ENCODE measurements at regions of chr12 and their contacts with region 1.

Region 1: GRCh38 chr12:24960222-24960855 is 11.4 kb upstream of the BCAT1 start:
- DNase-seq: peak; percentile 76
- H3K4me3 Mint-ChIP-seq: no peak overlapping the region
- H3K27ac Mint-ChIP-seq: no peak overlapping the region
- H3K4me1 Mint-ChIP-seq: peaks cover 23% of the 10 kb centered on the region
- H3K27me3 Mint-ChIP-seq: peaks cover 17% of the 10 kb centered on the region

Region 2: DNA sequence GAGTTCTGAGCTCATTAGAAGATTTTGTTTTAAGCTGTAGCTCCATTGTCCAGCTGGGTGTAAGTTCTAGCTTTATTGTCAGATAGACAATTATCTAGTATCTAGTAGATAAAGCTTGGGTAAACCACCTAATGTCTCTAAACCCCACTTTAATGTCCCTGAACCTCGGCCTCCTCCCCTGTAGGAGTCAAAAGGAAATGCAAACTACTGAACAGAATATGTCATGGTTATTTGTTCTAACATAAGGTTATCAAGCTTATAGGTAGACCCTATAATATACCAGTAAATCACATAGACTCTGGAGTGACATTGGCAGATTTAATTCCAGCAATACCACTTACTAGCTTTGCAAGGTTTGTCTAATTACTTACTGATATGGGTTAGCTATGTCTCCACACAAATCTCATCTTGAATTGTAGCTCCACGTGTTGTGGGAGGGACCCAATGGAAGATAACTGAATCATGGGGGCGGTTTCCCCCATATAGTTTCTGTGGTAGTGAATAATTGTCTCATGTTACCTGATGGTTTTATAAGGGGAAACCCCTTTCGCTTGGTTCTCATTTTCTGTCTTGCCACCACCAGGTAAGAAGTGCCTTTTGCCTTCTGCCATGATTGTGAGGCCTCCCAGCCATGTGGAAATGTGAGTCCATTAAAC is 40.9 kb before region 1 on chr12:
- CTCF ChIA-PET with region 1: no interaction called
- intact Hi-C with region 1: loop called (anchors 1 kb)
- DNase-seq: peak; percentile 78
- H3K4me3 Mint-ChIP-seq: no peak overlapping the region
- H3K27ac Mint-ChIP-seq: no peak overlapping the region
- H3K4me1 Mint-ChIP-seq: peaks cover 42% of the 10 kb centered on the region
- H3K27me3 Mint-ChIP-seq: peaks cover 13% of the 10 kb centered on the region

Region 3: DNA sequence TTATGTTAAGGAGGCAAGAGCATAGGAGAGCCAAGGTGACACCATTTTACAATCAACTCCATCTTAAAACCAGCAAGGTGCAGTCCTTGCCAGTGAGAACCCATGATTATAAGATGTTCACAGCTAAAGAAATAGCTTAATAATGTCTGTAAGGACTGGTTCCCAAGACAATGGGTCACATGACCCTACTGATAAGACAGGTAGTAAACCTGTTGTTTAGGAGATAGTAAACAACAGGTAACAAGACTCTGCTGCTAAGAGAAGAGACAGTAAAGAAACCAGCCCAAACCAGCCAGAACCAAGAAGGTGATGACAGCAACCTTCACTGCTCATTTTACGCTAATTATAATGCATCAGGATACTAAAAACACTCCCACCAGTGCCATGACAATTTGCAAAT is 11.7 kb after region 1 on chr12:
- CTCF ChIA-PET with region 1: interaction called, 10 read pairs
- intact Hi-C with region 1: no loop called
- DNase-seq: no peak
- H3K4me3 Mint-ChIP-seq: no peak overlapping the region
- H3K27ac Mint-ChIP-seq: no peak overlapping the region
- H3K4me1 Mint-ChIP-seq: peaks cover 1% of the 10 kb centered on the region
- H3K27me3 Mint-ChIP-seq: peaks cover 3% of the 10 kb centered on the region

Measured in activated naive CD4-positive, alpha-beta T cell treated with anti-CD3 and anti-CD28 coated beads for 36 hours (primary cell).